ENCODE measurements at regions of chr9 and their contacts with region 1.

Region 1: DNA sequence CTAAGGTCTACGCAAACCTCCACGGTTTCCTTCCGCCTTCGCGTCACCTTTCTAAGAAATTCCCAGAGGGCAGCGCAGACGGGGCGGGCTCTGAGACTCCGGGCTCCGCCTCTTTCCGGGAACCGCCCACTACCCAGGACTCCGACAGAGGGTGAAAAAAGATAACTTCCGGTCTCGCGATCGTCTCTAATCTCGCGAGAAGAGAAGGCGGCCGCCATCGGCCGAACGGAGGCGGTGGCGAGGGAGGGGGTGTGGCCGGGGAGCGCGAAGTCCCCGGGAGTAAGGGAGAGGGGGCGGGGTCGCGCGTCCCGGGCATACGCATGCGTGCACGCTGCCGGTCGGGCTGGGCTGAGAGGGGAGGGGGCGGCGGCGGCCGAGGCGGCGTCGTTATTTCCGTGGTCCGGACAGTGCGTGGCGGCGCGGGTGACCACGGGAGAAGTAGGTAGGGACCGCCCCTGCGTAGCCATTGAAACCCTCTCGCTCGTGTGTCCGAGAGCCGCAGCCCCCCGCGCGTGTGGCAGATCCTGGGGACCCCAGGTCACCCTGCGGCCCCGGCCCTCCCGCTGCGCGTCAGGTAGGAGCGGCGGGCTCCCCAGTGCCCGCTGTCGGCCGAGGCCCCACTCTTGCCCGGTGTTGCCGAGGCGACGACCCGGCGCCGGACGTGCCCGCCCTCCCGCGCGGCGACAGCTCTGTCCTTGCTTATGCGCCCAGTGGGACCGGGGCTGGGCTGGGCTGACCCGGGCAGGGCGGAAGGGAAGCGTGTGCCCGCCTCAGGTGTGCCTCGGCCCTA is at the start of gene NAA35:
- DNase-seq: peak; percentile 98
- H3K4me3 ChIP-seq: peak within 1 kb of the TSS; percentile 77 to 94 (median 84)
- H3K27ac ChIP-seq: peak within 1 kb of the TSS; percentile 82
- H3K4me1 ChIP-seq: peaks cover 22% of the 10 kb centered on the region
- H3K27me3 ChIP-seq: no peaks in the 10 kb centered on the region
- CTCF ChIP-seq: no peak
- total RNA-seq, gene NAA35: 37.7 to 38.0 TPM

Region 2: GRCh38 chr9:85741875-85742629 is 199.0 kb before region 1 on chr9 and contains the start of gene AGTPBP1:
- CTCF ChIA-PET with region 1: no interaction called
- dilution Hi-C with region 1: no loop called
- in situ Hi-C with region 1: no loop called
- intact Hi-C with region 1: loop called (anchors 5 kb)
- DNase-seq: peak; percentile 92
- H3K4me3 ChIP-seq: peak within 1 kb of the TSS; percentile 71 to 91 (median 77)
- H3K27ac ChIP-seq: peak within 1 kb of the TSS; percentile 80
- H3K4me1 ChIP-seq: peaks cover 16% of the 10 kb centered on the region
- H3K27me3 ChIP-seq: peaks cover 2% of the 10 kb centered on the region
- CTCF ChIP-seq: no peak
- total RNA-seq, gene AGTPBP1: 12.9 to 18.3 TPM

Region 3: DNA sequence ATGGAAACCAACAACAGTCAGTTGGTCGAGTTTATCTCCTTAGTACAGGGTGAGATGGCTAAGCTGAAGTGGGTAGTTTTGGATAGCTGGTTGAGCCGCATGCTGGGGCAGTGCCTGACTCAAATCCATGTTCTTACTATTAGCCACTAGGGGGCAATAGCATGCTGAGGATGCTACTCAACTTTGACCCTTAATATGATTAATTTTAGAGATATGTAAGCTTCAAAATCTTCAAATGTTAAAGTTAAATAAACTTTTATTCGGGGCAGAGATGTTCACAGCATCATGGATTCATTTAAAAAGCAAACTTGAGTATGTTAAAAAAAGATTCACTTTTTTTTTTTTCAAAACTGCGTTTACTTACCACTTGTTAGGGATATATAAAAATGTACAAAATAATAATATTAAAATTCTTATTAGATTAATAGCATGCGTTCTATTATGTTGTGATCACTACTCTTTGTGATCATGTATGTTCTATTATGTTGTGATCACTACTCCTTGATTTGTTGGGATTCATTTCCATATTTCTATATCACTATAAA is 261.4 kb after region 1 on chr9:
- CTCF ChIA-PET with region 1: no interaction called
- dilution Hi-C with region 1: no loop called
- in situ Hi-C with region 1: no loop called
- intact Hi-C with region 1: no loop called
- DNase-seq: peak; percentile 25
- H3K4me3 ChIP-seq: no peak overlapping the region
- H3K27ac ChIP-seq: no peak overlapping the region
- H3K4me1 ChIP-seq: no peaks in the 10 kb centered on the region
- H3K27me3 ChIP-seq: no peaks in the 10 kb centered on the region
- CTCF ChIP-seq: peak; percentile 82 to 86